ENCODE measurements at regions of chr10 and their contacts with region 1.

Region 1: DNA sequence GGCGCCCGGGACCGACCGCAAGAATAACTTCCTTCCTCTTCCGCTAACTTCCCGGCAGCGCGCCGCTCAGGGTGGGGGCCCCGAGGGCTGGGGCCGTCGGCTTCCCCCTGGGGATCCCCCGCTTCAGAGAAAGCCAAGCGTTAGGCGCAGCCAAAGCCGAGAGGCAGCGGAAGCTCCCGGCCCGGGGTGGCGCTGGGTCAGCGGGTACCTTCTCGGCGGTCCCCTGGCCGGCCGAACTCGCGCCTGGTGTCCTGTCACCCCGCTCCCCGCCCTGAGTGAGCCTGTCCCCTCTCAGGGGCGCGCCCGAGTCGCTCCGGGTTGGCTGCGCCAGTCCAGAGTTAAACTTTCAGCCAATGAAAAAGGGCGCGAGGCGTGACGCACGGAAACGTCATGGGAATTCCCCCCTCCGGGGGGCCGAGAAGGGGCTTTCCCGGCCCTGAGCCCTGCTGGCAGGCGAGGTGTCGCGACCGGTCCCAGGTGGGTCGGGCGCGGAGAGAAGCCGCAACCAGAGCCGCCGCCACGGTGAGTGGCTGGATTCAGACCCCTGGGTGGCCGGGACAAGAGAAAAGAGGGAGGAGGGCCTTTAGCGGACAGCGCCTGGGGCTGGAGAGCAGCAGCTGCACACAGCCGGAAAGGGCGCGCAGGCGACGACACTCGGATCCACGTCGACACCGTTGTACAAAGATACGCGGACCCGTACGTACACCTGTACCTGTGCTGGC is 1.3 kb upstream of the NFKB2 start:
- DNase-seq: peak; percentile 96
- H3K4me3 Mint-ChIP-seq: peak overlapping the region; percentile 92
- H3K27ac Mint-ChIP-seq: peak overlapping the region; percentile 99
- H3K4me1 Mint-ChIP-seq: peaks cover 7% of the 10 kb centered on the region
- H3K27me3 Mint-ChIP-seq: no peaks in the 10 kb centered on the region
- CTCF ChIP-seq: no peak

Region 2: GRCh38 chr10:102072673-102073527 is 321.3 kb before region 1 on chr10:
- CTCF ChIA-PET with region 1: no interaction called
- POLR2A ChIA-PET with region 1: no interaction called
- intact Hi-C with region 1: no loop called
- DNase-seq: peak; percentile 86
- H3K4me3 Mint-ChIP-seq: no peak overlapping the region
- H3K27ac Mint-ChIP-seq: peak overlapping the region; percentile 76
- H3K4me1 Mint-ChIP-seq: peaks cover 12% of the 10 kb centered on the region
- H3K27me3 Mint-ChIP-seq: no peaks in the 10 kb centered on the region
- CTCF ChIP-seq: peak; percentile 84

Region 3: DNA sequence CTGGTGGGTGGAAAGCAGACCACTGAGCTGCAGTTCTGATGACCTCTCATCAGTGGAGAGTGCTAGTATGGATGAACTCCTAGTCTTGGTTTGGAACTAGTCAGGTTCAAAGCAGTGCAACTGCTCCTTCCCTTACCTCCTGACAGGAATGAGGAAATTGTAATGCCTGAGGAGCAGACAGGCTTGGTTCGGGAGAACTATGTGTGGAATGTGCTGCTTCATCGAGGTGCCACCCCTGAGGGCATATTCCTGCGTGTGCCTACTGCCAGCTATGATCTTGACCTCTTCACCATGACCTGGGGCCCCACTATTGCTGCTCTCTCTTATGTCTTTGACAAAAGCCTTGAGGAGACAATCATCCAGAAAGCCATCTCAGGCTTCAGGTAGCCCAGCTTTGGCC is 26.2 kb before region 1 on chr10:
- CTCF ChIA-PET with region 1: interaction called, 7 read pairs
- POLR2A ChIA-PET with region 1: interaction called, 11 read pairs
- intact Hi-C with region 1: no loop called
- DNase-seq: no peak
- H3K4me3 Mint-ChIP-seq: no peak overlapping the region
- H3K27ac Mint-ChIP-seq: peak overlapping the region; percentile 67
- H3K4me1 Mint-ChIP-seq: peaks cover 23% of the 10 kb centered on the region
- H3K27me3 Mint-ChIP-seq: no peaks in the 10 kb centered on the region
- CTCF ChIP-seq: no peak

Region 4: DNA sequence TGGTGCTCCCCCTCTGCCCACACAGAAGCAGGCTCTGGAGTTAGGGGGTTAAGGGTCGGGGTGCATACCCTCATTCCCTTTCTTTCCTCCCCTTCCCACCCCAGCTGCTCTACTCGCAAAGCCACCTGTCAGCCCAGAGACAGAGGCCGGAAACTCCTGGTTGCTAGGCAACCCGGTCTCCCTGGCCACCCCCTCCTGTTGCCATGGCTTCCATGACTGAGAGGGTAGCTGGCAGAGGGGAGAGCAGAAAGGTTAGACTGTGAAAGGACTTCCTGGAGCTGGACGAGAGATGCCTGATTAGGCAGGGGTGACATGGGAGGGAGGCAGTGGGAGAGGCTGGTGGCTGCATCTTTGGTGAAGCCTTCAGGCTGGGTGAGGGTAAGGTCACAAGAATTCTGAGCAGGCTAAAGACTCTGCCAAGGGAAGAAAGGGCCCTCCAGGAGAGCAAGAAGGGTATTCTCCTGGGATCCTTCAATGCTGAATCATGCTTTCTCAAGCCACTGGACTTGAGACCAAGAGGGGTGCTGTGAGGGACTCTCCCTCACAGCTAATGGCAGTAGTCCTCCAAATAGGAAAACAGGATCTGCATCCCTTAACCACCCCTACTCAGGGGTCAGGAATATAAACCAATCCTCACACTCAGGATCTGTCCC is 18.9 kb after region 1 on chr10:
- CTCF ChIA-PET with region 1: interaction called, 14 read pairs
- POLR2A ChIA-PET with region 1: interaction called, 9 read pairs
- intact Hi-C with region 1: no loop called
- DNase-seq: no peak
- H3K4me3 Mint-ChIP-seq: no peak overlapping the region
- H3K27ac Mint-ChIP-seq: no peak overlapping the region
- H3K4me1 Mint-ChIP-seq: no peaks in the 10 kb centered on the region
- H3K27me3 Mint-ChIP-seq: peaks cover 57% of the 10 kb centered on the region
- CTCF ChIP-seq: no peak

Region 5: DNA sequence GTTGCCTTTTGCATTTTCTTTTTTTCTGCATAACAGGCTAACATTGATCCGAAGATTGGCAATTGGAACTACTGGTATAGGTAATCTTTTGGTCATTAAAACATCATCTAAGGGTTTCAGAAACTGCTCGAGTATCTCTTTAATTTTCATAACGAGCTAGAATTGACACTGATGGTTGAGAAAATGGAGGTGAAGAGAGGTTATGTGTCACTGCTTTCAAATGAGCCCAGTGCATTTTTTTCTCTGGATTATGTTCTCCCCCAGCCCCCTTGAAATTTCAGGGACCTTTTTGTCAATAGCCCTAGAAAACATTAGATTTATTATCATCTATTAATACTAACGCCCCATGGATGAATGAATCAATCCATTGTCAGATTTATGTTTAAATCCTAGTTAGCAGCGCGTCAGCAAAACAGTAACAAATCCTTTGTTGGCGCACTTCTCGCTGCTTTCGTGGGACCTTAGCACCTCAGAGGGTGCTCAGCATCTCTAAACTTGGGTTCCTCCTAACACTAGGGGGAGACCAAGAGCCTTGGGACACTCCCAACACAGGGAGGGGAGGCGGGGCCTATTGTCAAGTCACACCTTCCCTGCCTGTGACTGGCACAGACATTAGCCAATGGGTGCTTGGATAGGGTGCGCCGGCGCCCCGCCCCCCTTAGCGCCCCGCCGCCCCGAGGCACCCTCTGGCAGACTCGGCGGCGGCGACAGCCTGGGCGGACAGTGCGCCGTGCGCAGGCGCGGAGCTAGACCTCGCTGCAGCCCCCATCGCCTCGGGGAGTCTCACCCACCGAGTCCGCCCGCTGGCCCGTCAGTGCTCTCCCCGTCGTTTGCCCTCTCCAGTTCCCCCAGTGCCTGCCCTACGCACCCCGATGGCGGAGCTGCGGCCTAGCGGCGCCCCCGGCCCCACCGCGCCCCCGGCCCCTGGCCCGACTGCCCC is 109.3 kb after region 1 on chr10 and contains the start of gene SUFU:
- CTCF ChIA-PET with region 1: interaction called, 3 read pairs
- POLR2A ChIA-PET with region 1: interaction called, 14 read pairs
- intact Hi-C with region 1: no loop called
- DNase-seq: peak; percentile 100
- H3K4me3 Mint-ChIP-seq: no peak within 1 kb of the TSS
- H3K27ac Mint-ChIP-seq: peak within 1 kb of the TSS; percentile 65
- H3K4me1 Mint-ChIP-seq: peaks cover 16% of the 10 kb centered on the region
- H3K27me3 Mint-ChIP-seq: no peaks in the 10 kb centered on the region
- CTCF ChIP-seq: peak; percentile 75
- total RNA-seq, gene SUFU: 6.3 TPM in 2 replicates

Region 6: GRCh38 chr10:102720775-102721301 is 326.6 kb after region 1 on chr10:
- CTCF ChIA-PET with region 1: no interaction called
- POLR2A ChIA-PET with region 1: no interaction called
- intact Hi-C with region 1: no loop called
- DNase-seq: no peak
- H3K4me3 Mint-ChIP-seq: no peak overlapping the region
- H3K27ac Mint-ChIP-seq: peak overlapping the region; percentile 80
- H3K4me1 Mint-ChIP-seq: peaks cover 28% of the 10 kb centered on the region
- H3K27me3 Mint-ChIP-seq: no peaks in the 10 kb centered on the region
- CTCF ChIP-seq: no peak